Prostate gland (tissue), 2 donors: ENCODE measurements at regions of chr1 and their contacts with region 1.

Region 1: DNA sequence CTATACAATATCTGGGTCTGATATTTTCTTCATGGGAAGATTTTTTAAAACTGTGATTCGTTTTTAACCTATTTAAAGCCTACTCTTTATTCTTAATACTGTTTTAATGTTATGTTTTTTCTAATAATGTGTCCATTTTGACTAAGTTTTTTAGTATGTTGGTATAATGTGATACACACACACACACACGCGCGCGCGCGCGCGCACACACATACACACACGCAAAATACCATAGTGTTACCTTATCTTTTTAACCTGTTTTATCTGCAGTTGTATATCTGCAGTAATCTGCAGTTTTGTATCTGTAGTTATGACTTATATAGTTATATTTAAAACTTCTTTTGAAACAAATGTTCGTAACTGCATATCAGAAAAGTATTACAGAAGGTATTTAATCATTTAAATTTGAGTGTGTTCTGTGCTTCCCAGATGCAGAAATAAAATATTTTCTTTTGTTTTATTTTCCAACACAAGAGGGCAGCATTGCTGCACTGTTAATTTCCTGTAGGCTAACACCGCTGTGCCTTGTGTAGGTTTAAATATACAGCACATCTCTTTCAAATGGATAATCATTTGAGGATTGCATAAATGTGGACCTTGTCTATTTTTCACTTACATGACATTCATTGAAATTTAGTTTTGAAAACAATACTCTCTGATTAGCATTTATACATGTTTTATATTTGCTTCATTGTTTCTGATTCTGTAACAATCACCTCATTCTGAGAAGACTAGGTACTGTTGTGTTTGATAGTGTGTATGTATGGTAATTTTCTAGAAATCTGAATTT is 166.1 kb downstream of the PDE4B start:
- DNase-seq: peak; percentile 9
- H3K4me3 ChIP-seq: no peak overlapping the region
- H3K27ac ChIP-seq: no peak overlapping the region
- H3K4me1 ChIP-seq: peaks cover 4% of the 10 kb centered on the region
- H3K27me3 ChIP-seq: no peaks in the 10 kb centered on the region
- CTCF ChIP-seq: peak; percentile 72 to 91 (median 84)
- POLR2A ChIP-seq: no peak

Region 2: GRCh38 chr1:66242646-66243547 is 284.1 kb after region 1 on chr1:
- intact Hi-C with region 1: loop called (anchors 2 kb)
- DNase-seq: peak; percentile 84
- H3K4me3 ChIP-seq: no peak overlapping the region
- H3K27ac ChIP-seq: no peak overlapping the region
- H3K4me1 ChIP-seq: no peaks in the 10 kb centered on the region
- H3K27me3 ChIP-seq: no peaks in the 10 kb centered on the region
- CTCF ChIP-seq: peak; percentile 98 to 99 (median 99)
- POLR2A ChIP-seq: no peak

Region 3: DNA sequence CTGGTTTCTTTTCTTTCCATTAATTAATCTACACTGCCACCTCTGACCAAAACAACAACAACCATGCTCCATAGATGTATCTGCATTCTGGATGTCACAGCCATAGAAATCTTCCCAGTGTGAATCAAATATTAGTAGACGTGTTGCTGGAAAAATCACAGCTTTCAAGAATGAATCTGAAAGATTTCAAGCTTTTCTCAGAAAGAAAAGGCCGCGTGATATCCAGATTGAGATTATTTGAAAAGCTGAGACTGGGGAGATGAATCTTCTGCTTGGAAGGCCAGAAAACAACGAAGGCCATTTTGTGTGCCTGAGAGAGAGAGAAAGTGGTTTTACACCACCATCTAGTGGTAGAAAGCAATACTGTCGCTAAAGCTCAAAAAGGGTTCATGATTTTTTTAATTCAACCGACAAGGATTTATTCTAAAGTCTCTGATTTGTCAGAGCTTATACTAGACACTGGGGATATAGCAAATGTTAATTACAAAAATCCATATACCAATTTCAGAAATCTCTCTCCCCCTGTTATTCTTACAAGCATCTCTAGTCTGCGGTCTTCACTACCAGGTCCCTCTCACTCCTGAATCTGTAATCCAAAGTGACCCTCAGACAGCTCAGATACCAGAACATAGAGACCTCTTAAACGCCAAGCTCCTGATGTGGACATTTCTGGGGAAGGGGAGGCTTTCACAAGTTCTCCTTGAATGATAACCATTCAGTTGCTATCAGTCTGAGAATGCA is 487.7 kb after region 1 on chr1:
- intact Hi-C with region 1: loop called (anchors 5 kb)
- DNase-seq: peak; percentile 26
- H3K4me3 ChIP-seq: no peak overlapping the region
- H3K27ac ChIP-seq: no peak overlapping the region
- H3K4me1 ChIP-seq: no peaks in the 10 kb centered on the region
- H3K27me3 ChIP-seq: no peaks in the 10 kb centered on the region
- CTCF ChIP-seq: peak; percentile 74 to 92 (median 90)
- POLR2A ChIP-seq: no peak